ENCODE measurements at regions of chr2 and their contacts with region 1.

Region 1: DNA sequence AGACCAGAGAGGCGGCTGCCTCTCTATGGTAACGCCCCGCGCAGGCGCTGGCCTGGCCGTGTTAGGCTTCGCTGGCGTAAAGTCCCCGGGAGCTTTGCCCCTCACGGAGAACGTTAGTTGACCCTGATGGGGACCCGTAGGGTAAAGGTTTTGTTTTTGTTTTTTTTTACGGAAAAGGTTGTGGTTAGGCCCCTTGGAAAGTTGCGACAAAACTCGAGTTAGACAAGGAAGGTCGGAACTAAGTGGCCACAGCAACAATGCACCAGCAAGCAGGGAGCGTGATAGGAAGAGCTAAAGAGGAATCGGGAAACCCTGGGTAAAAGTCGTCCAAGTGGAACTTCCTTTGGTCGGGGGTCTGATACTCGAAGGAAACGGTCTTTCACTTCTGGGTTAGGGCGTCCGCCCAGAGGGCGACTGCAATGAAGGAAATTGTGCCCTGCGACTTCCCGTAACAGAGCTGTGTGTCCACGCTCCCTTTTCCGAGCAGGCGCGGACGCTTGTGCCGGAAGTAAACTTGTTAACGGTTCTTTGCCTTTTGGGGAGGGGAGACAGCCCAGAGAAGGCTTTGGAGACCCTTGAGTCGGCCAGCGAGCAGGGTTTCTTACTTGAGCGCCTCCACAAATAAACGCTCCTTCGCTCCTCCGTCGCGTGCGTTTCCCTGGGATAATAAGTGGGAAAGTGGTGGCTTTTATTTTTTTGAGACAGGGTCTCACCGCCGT is 493 bp upstream of the CLASP1 start:
- DNase-seq: peak; percentile 97
- H3K4me3 ChIP-seq: peak overlapping the region; percentile 36 to 96 (median 84)
- H3K27ac ChIP-seq: peak overlapping the region; percentile 95 to 99 (median 98)
- H3K4me1 ChIP-seq: peaks cover 0 to 34% (median 25%) of the 10 kb centered on the region in 4 donors
- H3K27me3 ChIP-seq: no peaks in the 10 kb centered on the region
- CTCF ChIP-seq: no peak
- EP300 ChIP-seq: no peak
- POLR2A ChIP-seq: peak; percentile 66

Region 2: GRCh38 chr2:121736462-121737341 is 86.9 kb after region 1 on chr2 and contains the start of gene NIFK:
- in situ Hi-C with region 1: loop called in 1 of 4 experiments (anchors 10 kb)
- intact Hi-C with region 1: no loop called
- DNase-seq: peak; percentile 100
- H3K4me3 ChIP-seq: peak within 1 kb of the TSS; percentile 69 to 92 (median 86)
- H3K27ac ChIP-seq: peak within 1 kb of the TSS; percentile 80 to 97 (median 88)
- H3K4me1 ChIP-seq: peaks cover 0 to 15% (median 13%) of the 10 kb centered on the region in 4 donors
- H3K27me3 ChIP-seq: no peaks in the 10 kb centered on the region
- CTCF ChIP-seq: peak in 1 of 5 experiments; percentile 28
- EP300 ChIP-seq: no peak
- POLR2A ChIP-seq: peak; percentile 70
- total RNA-seq, gene NIFK: 10.9 to 32.7 (median 18.7) TPM